ENCODE measurements at regions of chr11 and their contacts with region 1.

Region 1: DNA sequence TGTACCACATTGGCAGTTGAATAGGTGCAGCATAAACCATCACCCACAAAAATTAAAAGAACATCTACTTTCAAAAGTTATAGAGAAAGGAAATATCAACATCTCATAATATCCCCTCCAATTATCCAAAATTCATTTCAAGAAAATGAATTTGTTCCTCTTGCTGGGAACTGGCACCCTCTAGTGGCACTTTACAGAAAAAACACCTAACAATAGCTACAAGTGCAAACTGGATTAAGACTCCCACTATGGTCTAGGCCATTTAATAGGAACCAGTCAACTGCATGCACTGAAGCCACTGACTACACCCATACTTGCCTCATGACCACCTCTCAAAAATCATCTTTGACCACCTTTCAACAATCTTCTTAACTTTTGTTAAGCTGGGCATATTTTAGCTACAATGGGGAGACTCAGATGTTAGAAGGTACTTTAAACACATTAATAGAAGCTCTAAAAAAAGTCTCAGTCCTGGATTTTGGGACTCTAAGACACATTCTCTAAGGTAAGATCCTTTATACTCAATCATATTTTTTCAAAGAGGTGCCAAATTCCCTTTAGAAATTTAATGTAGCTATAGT is 17.3 kb downstream of the TRAF6 start:
- H3K4me3 ChIP-seq: no peak overlapping the region
- H3K27ac ChIP-seq: no peak overlapping the region
- H3K4me1 ChIP-seq: no peaks in the 10 kb centered on the region
- CTCF ChIP-seq: no peak

Region 2: DNA sequence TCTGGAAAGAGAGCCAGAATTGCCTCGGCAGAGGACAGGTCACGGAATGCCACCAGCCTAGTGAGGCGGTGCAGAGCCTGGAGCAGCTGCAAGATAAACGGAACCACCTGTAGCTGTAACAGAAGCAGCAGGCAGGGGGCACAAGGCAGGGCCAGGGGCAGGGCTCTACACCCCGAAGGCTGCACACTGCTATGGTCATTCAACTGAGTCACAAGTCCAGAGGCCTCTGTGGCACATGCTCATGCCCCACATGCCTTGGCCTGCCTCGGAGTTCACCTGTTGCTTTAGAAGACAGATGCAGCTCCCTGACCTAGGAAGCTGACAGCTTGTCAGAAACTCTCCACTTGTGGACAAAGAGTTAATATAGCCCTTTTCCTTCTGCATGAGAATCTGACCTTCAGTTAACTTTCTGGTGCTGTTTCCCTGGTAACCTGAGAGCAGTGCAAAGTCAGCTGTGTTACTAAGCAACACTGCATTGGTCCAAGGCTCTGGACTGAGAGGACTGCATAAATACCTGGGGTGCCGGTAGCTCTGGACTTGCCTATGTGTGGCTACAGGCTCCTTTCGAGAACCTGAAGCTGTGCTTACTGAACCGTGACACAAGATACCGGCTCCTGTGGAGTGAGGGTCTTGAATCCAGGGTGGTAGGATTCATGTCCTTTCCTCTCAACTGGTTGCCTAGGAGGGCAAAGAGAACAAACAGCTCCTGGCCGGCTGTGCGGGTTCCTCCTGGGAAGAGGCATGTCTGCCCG is 214.1 kb before region 1 on chr11:
- CTCF ChIA-PET with region 1: interaction called, 11 read pairs
- POLR2A ChIA-PET with region 1: no interaction called
- H3K4me3 ChIP-seq: no peak overlapping the region
- H3K27ac ChIP-seq: no peak overlapping the region
- H3K4me1 ChIP-seq: no peaks in the 10 kb centered on the region
- CTCF ChIP-seq: no peak

Region 3: DNA sequence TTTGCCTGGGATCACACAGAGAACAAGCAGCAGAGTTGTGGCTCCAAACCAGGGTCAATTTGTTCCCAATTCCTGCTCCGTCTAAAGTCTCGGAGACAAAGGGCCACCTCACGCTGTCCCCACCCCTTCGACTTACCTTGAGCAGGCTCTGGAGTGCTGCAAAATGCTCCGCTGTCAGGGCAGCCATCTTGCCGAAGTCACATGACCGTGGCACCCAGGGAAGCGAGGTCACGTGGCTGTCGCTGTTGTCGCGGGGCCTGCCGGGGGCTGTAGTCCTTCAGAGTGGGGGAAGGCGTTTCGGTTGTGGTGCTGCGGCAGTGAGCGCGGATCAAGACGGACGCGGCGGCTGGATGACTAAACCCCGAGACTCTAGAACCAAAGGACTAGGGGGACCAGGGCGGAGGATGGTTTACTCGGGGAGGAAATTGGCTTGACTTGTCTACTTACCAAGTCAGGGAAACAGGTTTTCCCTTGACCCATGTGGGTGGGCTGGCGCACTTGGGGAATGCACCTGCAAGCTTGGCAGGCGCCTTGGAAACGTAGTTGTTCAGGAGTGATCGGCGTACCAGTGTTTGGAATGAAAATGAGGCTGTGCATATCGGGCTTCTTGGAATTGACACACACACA is 203.5 kb before region 1 on chr11 and contains the start of gene COMMD9:
- CTCF ChIA-PET with region 1: interaction called, 73 read pairs
- POLR2A ChIA-PET with region 1: no interaction called
- H3K4me3 ChIP-seq: peak within 1 kb of the TSS; percentile 87
- H3K27ac ChIP-seq: no peak within 1 kb of the TSS
- H3K4me1 ChIP-seq: no peaks in the 10 kb centered on the region
- CTCF ChIP-seq: no peak

Measured in HEK293 (cell line).